Naive thymus-derived CD4-positive, alpha-beta T cell (primary cell): ENCODE measurements at regions of chr1 and their contacts with region 1.

Region 1: GRCh38 chr1:153510984-153511410 is 24.8 kb downstream of the S100A6 start:
- DNase-seq: peak; percentile 47 to 82 (median 68)
- ATAC-seq: peak; percentile 92
- H3K4me3 ChIP-seq: no peak overlapping the region
- H3K4me3 Mint-ChIP-seq: no peak overlapping the region
- H3K27ac ChIP-seq: no peak overlapping the region
- H3K27ac Mint-ChIP-seq: peak overlapping the region in 1 of 9 donors; percentile 10
- H3K4me1 ChIP-seq: peaks cover 3 to 4% of the 10 kb centered on the region in 2 donors
- H3K4me1 Mint-ChIP-seq: peaks cover 0 to 21% (median 6%) of the 10 kb centered on the region in 7 donors
- H3K27me3 ChIP-seq: no peaks in the 10 kb centered on the region
- H3K27me3 Mint-ChIP-seq: no peaks in the 10 kb centered on the region

Region 2: DNA sequence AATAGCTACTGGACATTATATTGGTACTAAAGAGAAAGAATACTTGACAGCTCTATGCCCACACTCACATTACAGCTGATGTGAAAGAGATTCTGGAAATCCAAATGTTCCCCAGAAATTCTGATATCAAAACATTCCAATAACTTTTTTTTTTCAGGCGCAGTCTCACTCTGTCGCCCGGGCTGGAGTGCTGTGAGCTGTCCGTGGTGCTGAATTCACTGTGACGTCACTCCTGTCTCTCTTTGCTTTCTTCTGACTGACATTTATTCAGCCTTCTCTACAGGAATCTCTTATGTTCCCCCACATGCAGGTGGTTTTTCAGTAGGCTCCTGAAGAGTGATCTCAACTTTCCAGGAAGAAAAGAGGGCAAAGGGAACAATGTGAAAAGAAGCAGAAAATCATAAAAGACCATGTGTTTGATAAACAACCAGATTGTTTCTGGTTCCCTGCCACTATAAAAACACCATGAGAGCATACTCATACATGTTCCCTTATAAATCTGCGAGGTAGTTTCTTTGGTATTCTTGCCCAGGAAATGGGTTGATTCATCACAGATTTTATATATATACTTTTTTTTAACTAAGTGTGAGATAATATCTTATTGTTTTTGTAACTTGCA is 88.4 kb before region 1 on chr1:
- CTCF ChIA-PET with region 1: no interaction called
- POLR2A ChIA-PET with region 1: no interaction called
- intact Hi-C with region 1: no loop called
- DNase-seq: peak; percentile 24 to 69 (median 58)
- ATAC-seq: peak; percentile 52
- H3K4me3 ChIP-seq: no peak overlapping the region
- H3K4me3 Mint-ChIP-seq: no peak overlapping the region
- H3K27ac ChIP-seq: no peak overlapping the region
- H3K27ac Mint-ChIP-seq: no peak overlapping the region
- H3K4me1 ChIP-seq: no peaks in the 10 kb centered on the region
- H3K4me1 Mint-ChIP-seq: peaks cover 0 to 1% (median 0%) of the 10 kb centered on the region in 7 donors
- H3K27me3 ChIP-seq: no peaks in the 10 kb centered on the region
- H3K27me3 Mint-ChIP-seq: peaks cover 5 to 69% (median 63%) of the 10 kb centered on the region in 5 donors

Region 3: GRCh38 chr1:153545067-153546055 is 34.4 kb after region 1 on chr1 and contains the start of gene S100A4:
- CTCF ChIA-PET with region 1: interaction called, 11 read pairs
- POLR2A ChIA-PET with region 1: interaction called, 5 read pairs
- intact Hi-C with region 1: loop called in 1 of 2 experiments (anchors 5 kb)
- DNase-seq: peak; percentile 50 to 93 (median 89)
- ATAC-seq: peak; percentile 84
- H3K4me3 ChIP-seq: peak within 1 kb of the TSS; percentile 69
- H3K4me3 Mint-ChIP-seq: peak within 1 kb of the TSS; percentile 85 to 97 (median 88)
- H3K27ac ChIP-seq: peak within 1 kb of the TSS; percentile 79
- H3K27ac Mint-ChIP-seq: peak within 1 kb of the TSS; percentile 93 to 99 (median 98)
- H3K4me1 ChIP-seq: peaks cover 53 to 69% of the 10 kb centered on the region in 2 donors
- H3K4me1 Mint-ChIP-seq: peaks cover 62 to 87% (median 74%) of the 10 kb centered on the region in 7 donors
- H3K27me3 ChIP-seq: no peaks in the 10 kb centered on the region
- H3K27me3 Mint-ChIP-seq: no peaks in the 10 kb centered on the region
- total RNA-seq, gene S100A4: 54.0 to 766 (median 204) TPM

Region 4: DNA sequence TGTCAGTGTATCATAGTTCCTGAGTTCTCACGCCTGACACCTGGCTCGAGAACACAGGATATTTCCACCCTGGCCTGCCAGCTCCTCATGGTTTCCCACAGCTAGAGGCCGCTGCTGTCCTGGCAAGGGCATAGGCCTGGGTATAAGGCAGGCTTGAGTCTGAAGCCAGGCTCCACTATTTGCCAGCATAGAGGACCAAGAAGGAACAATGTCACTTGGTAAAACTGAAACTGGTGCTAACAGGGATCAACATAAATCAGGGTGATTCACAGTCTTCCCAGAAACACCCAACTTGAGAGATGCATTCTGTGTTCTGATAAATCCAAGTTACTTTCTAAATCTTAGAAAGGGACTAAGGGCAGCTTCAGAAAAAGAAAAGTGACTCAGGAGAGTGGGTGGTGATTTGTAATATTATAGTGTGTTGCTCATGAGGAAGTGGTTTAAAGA is 61.6 kb after region 1 on chr1:
- CTCF ChIA-PET with region 1: interaction called, 119 read pairs
- POLR2A ChIA-PET with region 1: interaction called, 4 read pairs
- intact Hi-C with region 1: loop called (anchors 1 kb)
- DNase-seq: peak in 8 of 9 donors; percentile 24 to 51 (median 41)
- ATAC-seq: peak; percentile 81
- H3K4me3 ChIP-seq: no peak overlapping the region
- H3K4me3 Mint-ChIP-seq: no peak overlapping the region
- H3K27ac ChIP-seq: no peak overlapping the region
- H3K27ac Mint-ChIP-seq: peak overlapping the region in 1 of 9 donors; percentile 56
- H3K4me1 ChIP-seq: peaks cover 0 to 9% of the 10 kb centered on the region in 2 donors
- H3K4me1 Mint-ChIP-seq: peaks cover 9 to 23% (median 16%) of the 10 kb centered on the region in 7 donors
- H3K27me3 ChIP-seq: no peaks in the 10 kb centered on the region
- H3K27me3 Mint-ChIP-seq: peaks cover 0 to 16% (median 9%) of the 10 kb centered on the region in 5 donors

Region 5: DNA sequence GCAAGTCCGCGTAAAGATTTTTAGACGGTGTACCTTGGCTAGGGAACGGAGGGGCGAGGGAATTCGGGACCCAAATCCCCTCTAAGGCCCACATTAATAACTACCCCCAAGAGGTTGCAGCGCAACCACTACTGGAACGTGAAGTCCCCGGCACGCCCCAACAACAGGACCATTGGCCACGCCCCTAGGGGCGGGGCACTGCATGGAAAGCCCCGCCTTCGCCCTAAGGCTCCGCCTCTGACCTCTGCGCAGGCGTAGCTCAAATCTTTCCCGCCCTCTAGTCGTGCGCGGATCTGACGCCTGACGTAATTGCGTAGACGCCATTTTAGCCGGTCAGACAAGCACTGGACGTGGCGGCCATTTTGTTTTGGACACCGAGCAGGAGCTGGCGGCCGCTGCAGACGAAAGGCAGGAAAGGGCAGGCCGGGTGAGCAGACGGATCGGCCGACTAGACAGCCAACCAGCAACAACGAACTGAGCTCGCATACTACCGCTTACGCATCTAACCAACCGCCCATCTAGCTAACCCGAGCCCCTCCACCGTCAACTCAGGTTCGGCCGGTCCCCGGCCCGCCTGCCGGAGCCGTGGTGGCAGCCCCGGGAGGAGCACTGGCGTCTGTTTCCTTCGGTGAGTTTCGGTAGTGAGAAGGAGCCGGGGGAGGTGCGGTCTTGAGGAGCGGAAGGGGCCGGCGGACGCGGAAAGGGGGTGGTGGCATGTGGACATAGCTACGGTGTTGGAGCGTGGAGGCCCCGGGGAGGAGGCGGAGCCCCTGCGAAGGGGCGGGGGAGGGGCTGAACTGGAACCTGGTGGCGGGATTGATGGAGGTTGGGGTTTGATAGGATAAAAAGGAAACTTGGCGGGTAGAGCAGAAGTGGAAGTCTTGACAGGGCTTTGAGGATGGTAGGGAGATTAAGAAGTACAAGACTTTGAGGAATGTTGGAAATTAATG is 123.0 kb after region 1 on chr1 and contains the start of gene CHTOP:
- CTCF ChIA-PET with region 1: interaction called, 3 read pairs
- POLR2A ChIA-PET with region 1: no interaction called
- intact Hi-C with region 1: loop called in 1 of 2 experiments (anchors 5 kb)
- DNase-seq: peak; percentile 96 to 99 (median 96)
- ATAC-seq: peak; percentile 95
- H3K4me3 ChIP-seq: peak within 1 kb of the TSS; percentile 99
- H3K4me3 Mint-ChIP-seq: peak within 1 kb of the TSS; percentile 97 to 100 (median 99)
- H3K27ac ChIP-seq: peak within 1 kb of the TSS; percentile 98
- H3K27ac Mint-ChIP-seq: peak within 1 kb of the TSS; percentile 98 to 100 (median 100)
- H3K4me1 ChIP-seq: peaks cover 11 to 25% of the 10 kb centered on the region in 2 donors
- H3K4me1 Mint-ChIP-seq: peaks cover 30 to 52% (median 41%) of the 10 kb centered on the region in 7 donors
- H3K27me3 ChIP-seq: no peaks in the 10 kb centered on the region
- H3K27me3 Mint-ChIP-seq: peaks cover 0 to 3% (median 0%) of the 10 kb centered on the region in 5 donors
- total RNA-seq, gene CHTOP: 85.2 to 143 (median 116) TPM

Region 6: GRCh38 chr1:153749408-153750005 is 238.5 kb after region 1 on chr1:
- CTCF ChIA-PET with region 1: interaction called, 3 read pairs
- POLR2A ChIA-PET with region 1: no interaction called
- intact Hi-C with region 1: loop called (anchors 1 kb)
- DNase-seq: peak; percentile 62 to 79 (median 76)
- ATAC-seq: peak; percentile 100
- H3K4me3 ChIP-seq: no peak overlapping the region
- H3K4me3 Mint-ChIP-seq: no peak overlapping the region
- H3K27ac ChIP-seq: no peak overlapping the region
- H3K27ac Mint-ChIP-seq: peak overlapping the region in 4 of 9 donors; percentile 0 to 71 (median 8)
- H3K4me1 ChIP-seq: no peaks in the 10 kb centered on the region
- H3K4me1 Mint-ChIP-seq: peaks cover 0 to 9% (median 4%) of the 10 kb centered on the region in 7 donors
- H3K27me3 ChIP-seq: no peaks in the 10 kb centered on the region
- H3K27me3 Mint-ChIP-seq: no peaks in the 10 kb centered on the region